K562 (cell line): ENCODE measurements at regions of chr9 and their contacts with region 1.

Region 1: DNA sequence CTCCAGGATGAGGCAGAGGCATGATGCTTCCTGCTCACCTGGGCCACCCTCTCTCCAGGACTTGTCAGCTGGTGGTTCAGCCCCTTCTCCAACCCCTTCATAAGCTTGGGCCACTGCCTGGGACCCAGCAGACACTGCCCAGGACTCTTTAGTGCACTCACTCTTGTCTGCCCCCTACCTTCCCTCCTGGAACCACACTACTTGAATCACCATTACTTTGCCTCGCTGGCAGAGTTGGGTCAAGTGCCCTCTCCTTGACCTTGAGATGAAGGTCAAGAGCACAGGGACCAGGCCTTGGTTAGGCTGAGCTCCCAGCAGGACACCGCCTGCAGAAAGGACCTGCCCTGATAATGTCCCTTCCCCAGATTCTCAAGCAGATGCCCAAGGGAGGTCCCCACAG is 8.5 kb upstream of the ENDOG start:
- DNase-seq: no peak
- ATAC-seq: peak; percentile 75
- H3K4me3 ChIP-seq: no peak overlapping the region
- H3K27ac ChIP-seq: no peak overlapping the region
- H3K4me1 ChIP-seq: peaks cover 0 to 3% of the 10 kb centered on the region in 2 experiments; a peak in 3 of 5 replicates
- H3K27me3 ChIP-seq: no peaks in the 10 kb centered on the region
- CTCF ChIP-seq: peak in 2 of 3 experiments; percentile 29 to 44; a peak in 5 of 6 replicates
- EP300 ChIP-seq: no peak
- POLR2A ChIP-seq: peak; percentile 33; the same call in 1 of the 2 replicates
- RAD21 ChIP-seq: no peak; a peak in 1 of 4 replicates

Region 2: GRCh38 chr9:128792978-128793686 is 16.7 kb before region 1 on chr9:
- CTCF ChIA-PET with region 1: no interaction called
- POLR2A ChIA-PET with region 1: interaction called, 12 read pairs
- in situ Hi-C with region 1: no loop called
- intact Hi-C with region 1: no loop called
- DNase-seq: peak in 1 of 4 experiments; percentile 3
- ATAC-seq: no peak
- H3K4me3 ChIP-seq: no peak overlapping the region
- H3K27ac ChIP-seq: no peak overlapping the region
- H3K4me1 ChIP-seq: peaks cover 4% of the 10 kb centered on the region in 2 experiments; a peak in 3 of 5 replicates
- H3K27me3 ChIP-seq: no peaks in the 10 kb centered on the region
- CTCF ChIP-seq: no peak
- EP300 ChIP-seq: no peak
- POLR2A ChIP-seq: no peak
- RAD21 ChIP-seq: no peak